ENCODE measurements at regions of chr22 and their contacts with region 1.

Region 1: DNA sequence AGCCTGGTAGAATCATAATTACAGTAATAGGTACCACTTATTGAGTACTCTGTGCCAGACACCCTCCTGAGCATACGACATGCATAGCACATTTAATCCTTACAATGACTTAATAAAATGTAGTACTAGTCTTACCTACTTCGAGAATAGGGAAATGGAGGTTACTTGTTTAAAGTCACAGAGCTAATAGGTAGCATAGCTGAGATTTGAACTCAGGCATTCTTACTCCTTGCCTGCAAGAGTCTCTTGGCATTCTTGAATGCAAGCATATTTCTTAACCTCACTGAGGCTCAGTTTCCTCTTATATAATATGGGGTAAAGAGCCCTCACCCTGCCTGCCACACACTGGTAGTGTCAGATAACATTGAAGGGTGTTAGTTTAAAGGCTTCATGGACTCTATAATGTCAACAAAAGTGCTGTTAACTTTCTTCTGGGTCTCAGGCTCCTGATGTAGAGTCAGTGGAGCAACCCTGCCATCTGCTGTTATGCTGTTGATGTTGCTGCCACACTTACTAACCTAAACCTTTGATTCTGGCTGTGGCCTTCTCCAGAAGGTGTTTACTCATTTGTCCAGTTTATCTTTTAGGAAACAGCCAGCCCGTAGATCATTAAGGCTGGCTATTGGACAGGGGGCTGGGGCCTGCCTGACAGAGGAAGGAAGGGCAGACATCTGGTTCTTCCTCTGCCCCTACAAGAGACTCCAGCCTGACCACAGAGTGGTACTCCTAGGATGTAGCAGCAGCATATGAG is 18.9 kb downstream of the LIMK2 start:
- DNase-seq: peak; percentile 41
- H3K4me3 Mint-ChIP-seq: no peak overlapping the region
- H3K27ac Mint-ChIP-seq: peak overlapping the region; percentile 11
- H3K4me1 Mint-ChIP-seq: peaks cover 52% of the 10 kb centered on the region
- H3K27me3 Mint-ChIP-seq: no peaks in the 10 kb centered on the region
- CTCF ChIP-seq: peak; percentile 51

Region 2: DNA sequence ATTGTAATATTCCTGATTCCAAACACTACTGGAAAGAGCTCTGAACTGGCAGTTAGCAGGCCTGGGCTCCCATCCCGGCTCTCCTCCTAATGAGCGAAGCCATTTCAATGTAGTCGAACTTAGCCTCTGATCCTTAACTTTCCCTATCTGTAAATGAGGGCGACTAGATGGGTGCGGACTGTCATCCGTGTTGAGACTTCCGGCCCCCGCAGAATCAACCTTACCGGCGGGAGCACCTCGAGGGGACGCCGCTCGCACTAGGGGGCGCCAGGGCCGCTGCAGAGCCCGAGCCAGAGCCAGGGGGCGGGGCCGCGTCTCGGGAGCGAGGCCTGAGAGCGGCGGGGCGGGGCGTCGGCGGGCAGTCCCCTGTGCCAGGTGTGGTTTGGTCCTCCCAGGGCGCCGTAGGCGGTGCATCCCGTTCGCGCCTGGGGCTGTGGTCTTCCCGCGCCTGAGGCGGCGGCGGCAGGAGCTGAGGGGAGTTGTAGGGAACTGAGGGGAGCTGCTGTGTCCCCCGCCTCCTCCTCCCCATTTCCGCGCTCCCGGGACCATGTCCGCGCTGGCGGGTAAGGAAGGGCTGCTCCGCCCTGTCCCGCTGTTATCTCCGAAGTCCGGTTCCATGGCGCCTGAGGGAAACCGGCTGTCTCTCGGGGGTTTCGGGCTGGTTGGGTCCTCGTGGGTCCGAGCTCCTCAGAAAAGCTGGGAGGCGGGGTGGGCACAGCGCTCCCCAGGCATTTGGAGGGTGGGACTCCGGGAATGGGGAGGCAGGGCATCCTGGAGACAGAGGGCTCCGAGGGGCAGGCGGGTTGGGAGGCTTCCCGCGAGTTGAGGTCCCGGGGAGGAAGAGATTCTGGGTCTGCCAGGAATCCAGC is 18.9 kb before region 1 on chr22 and contains the start of gene LIMK2:
- CTCF ChIA-PET with region 1: interaction called, 19 read pairs
- intact Hi-C with region 1: loop called (anchors 2 kb)
- DNase-seq: peak; percentile 99
- H3K4me3 Mint-ChIP-seq: peak within 1 kb of the TSS; percentile 85
- H3K27ac Mint-ChIP-seq: peak within 1 kb of the TSS; percentile 41
- H3K4me1 Mint-ChIP-seq: peaks cover 48% of the 10 kb centered on the region
- H3K27me3 Mint-ChIP-seq: no peaks in the 10 kb centered on the region
- CTCF ChIP-seq: peak; percentile 80
- total RNA-seq, gene LIMK2: 59.9 and 60.7 TPM in 2 replicates

Measured in Calu3 (cell line).